CD4-positive, alpha-beta memory T cell (primary cell): ENCODE measurements at regions of chr3 and their contacts with region 1.

Region 1: GRCh38 chr3:133487920-133488540 is 85.5 kb upstream of the CDV3 start:
- DNase-seq: peak; percentile 48 to 61 (median 52)
- H3K4me3 ChIP-seq: no peak overlapping the region
- H3K4me3 Mint-ChIP-seq: peak overlapping the region in 3 of 8 donors; percentile 6 to 53 (median 21)
- H3K27ac ChIP-seq: no peak overlapping the region
- H3K27ac Mint-ChIP-seq: peak overlapping the region; percentile 3 to 85 (median 36)
- H3K4me1 ChIP-seq: peaks cover 49% of the 10 kb centered on the region
- H3K4me1 Mint-ChIP-seq: peaks cover 41 to 50% (median 45%) of the 10 kb centered on the region in 4 donors
- H3K27me3 ChIP-seq: no peaks in the 10 kb centered on the region
- H3K27me3 Mint-ChIP-seq: no peaks in the 10 kb centered on the region

Region 2: GRCh38 chr3:133368371-133369067 is 119.5 kb before region 1 on chr3:
- CTCF ChIA-PET with region 1: no interaction called
- POLR2A ChIA-PET with region 1: no interaction called
- intact Hi-C with region 1: no loop called
- DNase-seq: no peak
- H3K4me3 ChIP-seq: no peak overlapping the region
- H3K4me3 Mint-ChIP-seq: no peak overlapping the region
- H3K27ac ChIP-seq: no peak overlapping the region
- H3K27ac Mint-ChIP-seq: no peak overlapping the region
- H3K4me1 ChIP-seq: no peaks in the 10 kb centered on the region
- H3K4me1 Mint-ChIP-seq: no peaks in the 10 kb centered on the region
- H3K27me3 ChIP-seq: no peaks in the 10 kb centered on the region
- H3K27me3 Mint-ChIP-seq: peaks cover 2 to 5% of the 10 kb centered on the region in 2 donors

Region 3: DNA sequence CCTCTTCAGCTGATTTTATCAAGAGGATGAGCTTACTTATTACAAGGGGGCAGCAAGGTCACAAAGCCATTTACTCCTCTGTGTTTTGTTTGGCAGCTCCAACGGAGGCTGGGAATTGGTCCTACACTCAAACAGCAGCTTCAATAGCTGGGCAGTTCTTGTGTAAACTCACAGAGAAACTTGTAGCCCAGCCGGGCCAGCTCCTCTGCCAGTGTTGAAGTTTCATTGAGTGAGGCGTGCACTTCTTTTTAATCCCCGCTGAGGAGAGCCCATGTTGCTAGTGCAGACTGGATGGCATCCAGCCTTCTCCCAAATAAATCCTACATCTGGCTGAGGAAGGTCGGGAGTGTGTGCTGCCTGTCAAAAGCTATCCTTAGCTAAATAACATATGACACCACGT is 28.6 kb before region 1 on chr3:
- CTCF ChIA-PET with region 1: interaction called, 10 read pairs
- POLR2A ChIA-PET with region 1: no interaction called
- intact Hi-C with region 1: no loop called
- DNase-seq: no peak
- H3K4me3 ChIP-seq: no peak overlapping the region
- H3K4me3 Mint-ChIP-seq: no peak overlapping the region
- H3K27ac ChIP-seq: no peak overlapping the region
- H3K27ac Mint-ChIP-seq: no peak overlapping the region
- H3K4me1 ChIP-seq: peaks cover 13% of the 10 kb centered on the region
- H3K4me1 Mint-ChIP-seq: peaks cover 5 to 21% (median 13%) of the 10 kb centered on the region in 4 donors
- H3K27me3 ChIP-seq: no peaks in the 10 kb centered on the region
- H3K27me3 Mint-ChIP-seq: peaks cover 0 to 1% of the 10 kb centered on the region in 2 donors

Region 4: GRCh38 chr3:133506215-133506901 is 18.3 kb after region 1 on chr3:
- CTCF ChIA-PET with region 1: interaction called, 27 read pairs
- POLR2A ChIA-PET with region 1: interaction called, 36 read pairs
- intact Hi-C with region 1: no loop called
- DNase-seq: peak in 4 of 5 donors; percentile 42 to 60 (median 52)
- H3K4me3 ChIP-seq: peak overlapping the region in 1 of 2 donors; percentile 34
- H3K4me3 Mint-ChIP-seq: peak overlapping the region; percentile 64 to 92 (median 86)
- H3K27ac ChIP-seq: peak overlapping the region; percentile 59
- H3K27ac Mint-ChIP-seq: peak overlapping the region; percentile 81 to 98 (median 94)
- H3K4me1 ChIP-seq: peaks cover 16% of the 10 kb centered on the region
- H3K4me1 Mint-ChIP-seq: peaks cover 12 to 15% (median 13%) of the 10 kb centered on the region in 4 donors
- H3K27me3 ChIP-seq: no peaks in the 10 kb centered on the region
- H3K27me3 Mint-ChIP-seq: no peaks in the 10 kb centered on the region

Region 5: GRCh38 chr3:133578548-133579191 is 90.6 kb after region 1 on chr3:
- CTCF ChIA-PET with region 1: interaction called, 123 read pairs
- POLR2A ChIA-PET with region 1: interaction called, 89 read pairs
- intact Hi-C with region 1: loop called (anchors 1 kb)
- DNase-seq: peak in 1 of 5 donors; percentile 19
- H3K4me3 ChIP-seq: peak overlapping the region in 1 of 2 donors; percentile 13
- H3K4me3 Mint-ChIP-seq: peak overlapping the region; percentile 39 to 96 (median 76)
- H3K27ac ChIP-seq: peak overlapping the region; percentile 28
- H3K27ac Mint-ChIP-seq: peak overlapping the region in 6 of 7 donors; percentile 56 to 97 (median 68)
- H3K4me1 ChIP-seq: peaks cover 78% of the 10 kb centered on the region
- H3K4me1 Mint-ChIP-seq: peaks cover 45 to 76% (median 65%) of the 10 kb centered on the region in 4 donors
- H3K27me3 ChIP-seq: no peaks in the 10 kb centered on the region
- H3K27me3 Mint-ChIP-seq: no peaks in the 10 kb centered on the region

Region 6: DNA sequence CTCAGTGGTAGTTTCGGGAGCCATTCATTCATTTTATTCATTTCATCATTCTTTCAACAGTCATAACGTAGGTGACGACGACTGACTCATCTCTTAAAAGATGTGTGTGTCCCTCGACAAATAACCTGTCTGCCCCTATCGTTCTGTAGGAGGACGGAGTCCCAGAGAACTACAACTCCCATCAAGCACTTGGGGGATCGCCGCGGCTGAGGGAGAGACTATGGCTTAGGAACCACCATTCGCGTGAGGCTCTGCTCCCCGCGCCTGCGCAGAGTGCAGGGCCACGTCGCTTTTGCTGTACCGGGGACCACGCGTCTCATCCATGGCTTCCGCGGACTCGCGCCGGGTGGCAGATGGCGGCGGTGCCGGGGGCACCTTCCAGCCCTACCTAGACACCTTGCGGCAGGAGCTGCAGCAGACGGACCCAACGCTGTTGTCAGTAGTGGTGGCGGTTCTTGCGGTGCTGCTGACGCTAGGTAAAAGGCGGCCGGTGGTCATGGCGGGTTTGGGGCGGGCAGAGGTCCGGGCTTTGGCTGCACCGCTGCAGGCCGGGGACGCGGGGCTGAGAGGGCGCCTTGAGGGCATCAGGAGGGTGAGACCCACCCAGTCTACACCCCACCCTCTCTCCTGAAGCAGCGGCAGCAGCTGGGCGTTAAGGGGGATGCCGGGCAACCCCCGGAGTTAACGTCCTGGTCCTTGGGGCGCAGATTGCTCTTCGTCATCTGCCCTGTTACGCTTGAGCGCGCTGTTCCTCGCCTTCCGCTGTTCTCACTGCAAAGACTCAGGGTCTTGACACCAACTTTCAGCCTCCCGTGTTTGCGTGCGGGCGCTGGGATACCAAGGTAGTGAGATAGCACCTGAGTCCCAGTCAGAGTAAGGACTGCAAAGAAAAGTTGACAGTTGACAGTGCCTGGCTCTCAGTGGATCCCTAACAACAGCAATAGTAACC is 317.8 kb after region 1 on chr3 and contains the start of gene SRPRB:
- CTCF ChIA-PET with region 1: interaction called, 3 read pairs
- POLR2A ChIA-PET with region 1: no interaction called
- intact Hi-C with region 1: loop called (anchors 1 kb)
- DNase-seq: peak; percentile 93 to 98 (median 96)
- H3K4me3 ChIP-seq: peak within 1 kb of the TSS; percentile 57 to 85
- H3K4me3 Mint-ChIP-seq: peak within 1 kb of the TSS; percentile 94 to 98 (median 98)
- H3K27ac ChIP-seq: peak within 1 kb of the TSS; percentile 65
- H3K27ac Mint-ChIP-seq: peak within 1 kb of the TSS; percentile 92 to 98 (median 95)
- H3K4me1 ChIP-seq: peaks cover 29% of the 10 kb centered on the region
- H3K4me1 Mint-ChIP-seq: peaks cover 20 to 46% (median 29%) of the 10 kb centered on the region in 4 donors
- H3K27me3 ChIP-seq: no peaks in the 10 kb centered on the region
- H3K27me3 Mint-ChIP-seq: peaks cover 0 to 5% of the 10 kb centered on the region in 2 donors
- total RNA-seq, gene SRPRB: 45.6 to 49.8 TPM